Common myeloid progenitor, CD34-positive (primary cell): ENCODE measurements at regions of chr10 and their contacts with region 1.

Region 1: DNA sequence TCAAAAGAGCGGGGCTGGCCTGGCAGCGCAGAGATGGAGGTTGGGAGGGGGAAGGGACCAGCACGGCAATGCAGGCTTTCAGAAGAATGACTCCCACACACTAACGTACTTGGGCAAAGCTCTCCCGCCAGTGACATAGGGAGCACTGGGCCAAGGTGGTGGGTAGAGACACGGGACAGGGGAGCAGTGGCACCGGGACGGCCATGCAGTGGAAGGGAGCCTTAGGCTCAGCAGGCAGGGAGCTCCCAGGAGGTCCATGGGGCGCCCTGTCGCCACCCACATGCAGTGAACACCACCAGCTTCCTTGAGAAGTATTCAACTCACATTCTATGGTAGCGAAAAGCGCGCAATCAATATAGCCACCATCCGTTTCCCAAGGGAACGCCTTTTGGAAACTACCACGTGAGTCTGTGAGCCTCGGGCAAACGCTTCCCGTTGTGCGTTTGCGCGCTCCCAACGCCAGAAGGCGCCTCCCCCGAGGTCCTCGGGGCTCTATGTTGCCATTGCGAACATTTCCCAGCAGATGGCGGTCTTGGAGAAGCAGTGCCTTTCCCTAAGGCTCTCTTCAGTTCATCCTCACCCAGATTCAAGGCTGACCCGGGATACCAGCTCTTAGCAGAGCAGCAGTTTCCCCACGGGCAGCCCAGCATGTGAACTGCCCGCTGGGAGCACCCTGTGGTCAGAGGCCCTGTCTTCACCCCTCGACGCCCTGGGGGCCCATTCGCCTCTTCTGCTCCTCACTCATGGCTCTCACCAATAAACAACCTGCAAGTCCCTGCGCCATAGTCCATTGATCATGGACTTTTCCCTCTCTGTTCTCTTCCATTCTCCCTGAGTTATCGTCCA is 16.4 kb upstream of the OPALIN start:
- DNase-seq: peak; percentile 68 to 77 (median 70)
- H3K4me3 ChIP-seq: peak overlapping the region; percentile 17 to 86 (median 72)
- H3K27ac ChIP-seq: no peak overlapping the region
- H3K4me1 ChIP-seq: peaks cover 0 to 10% (median 5%) of the 10 kb centered on the region in 4 experiments
- H3K27me3 ChIP-seq: peaks cover 0 to 5% (median 0%) of the 10 kb centered on the region in 5 experiments

Region 2: DNA sequence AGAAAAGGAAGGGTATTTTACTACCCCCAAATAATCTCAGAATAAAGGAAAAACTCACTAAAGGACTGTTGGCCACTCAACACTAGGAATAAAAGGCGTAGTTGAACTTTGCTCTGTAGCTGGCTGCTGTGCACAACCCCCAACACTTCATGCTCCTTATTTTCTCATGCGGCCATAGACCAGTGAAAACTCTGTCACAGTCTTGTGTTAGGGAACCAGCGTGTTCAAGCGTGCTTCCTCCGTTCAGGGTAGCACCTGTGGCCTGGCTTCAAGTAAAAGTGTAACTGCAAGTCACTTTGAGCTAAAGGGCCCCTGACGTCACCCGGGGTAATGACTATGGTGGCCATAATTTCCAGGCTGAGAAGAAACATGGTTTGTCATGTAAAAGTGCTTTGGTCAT is 130.9 kb before region 1 on chr10:
- CTCF ChIA-PET with region 1: no interaction called
- POLR2A ChIA-PET with region 1: no interaction called
- DNase-seq: peak in 1 of 3 donors; percentile 37
- H3K4me3 ChIP-seq: no peak overlapping the region
- H3K27ac ChIP-seq: no peak overlapping the region
- H3K4me1 ChIP-seq: peaks cover 0 to 9% (median 2%) of the 10 kb centered on the region in 4 experiments
- H3K27me3 ChIP-seq: no peaks in the 10 kb centered on the region

Region 3: DNA sequence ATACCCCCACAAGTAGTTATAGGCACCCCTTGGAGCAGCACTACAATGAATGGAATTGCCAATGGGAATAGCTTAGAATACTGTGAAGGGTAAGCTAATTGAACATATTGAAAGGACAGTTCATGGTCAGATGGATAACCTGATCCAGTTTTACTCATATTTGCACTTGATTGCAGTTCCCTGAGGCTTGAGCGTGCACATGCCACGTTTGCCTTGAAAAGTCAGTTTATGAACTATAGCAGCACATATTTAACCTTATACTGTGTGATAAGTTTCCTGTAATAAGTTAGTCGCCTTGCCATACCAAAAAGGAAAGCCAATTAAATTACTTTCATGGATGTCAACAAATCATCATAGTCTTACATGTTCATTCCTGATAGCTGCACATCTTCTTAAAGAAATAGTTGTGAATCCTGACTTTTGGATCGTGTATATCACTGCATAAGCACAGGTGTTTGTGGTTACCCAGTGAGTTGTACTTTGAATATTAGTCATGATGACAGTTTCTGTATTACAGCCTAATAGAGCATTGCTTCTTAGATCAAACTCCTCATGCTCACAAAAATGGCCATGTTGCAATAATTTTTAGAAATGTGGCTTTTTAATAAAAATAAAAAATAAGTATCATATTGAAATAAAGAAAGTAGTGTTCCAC is 49.4 kb before region 1 on chr10:
- CTCF ChIA-PET with region 1: no interaction called
- POLR2A ChIA-PET with region 1: no interaction called
- DNase-seq: no peak
- H3K4me3 ChIP-seq: no peak overlapping the region
- H3K27ac ChIP-seq: no peak overlapping the region
- H3K4me1 ChIP-seq: peaks cover 0 to 11% (median 0%) of the 10 kb centered on the region in 4 experiments
- H3K27me3 ChIP-seq: peaks cover 0 to 8% (median 0%) of the 10 kb centered on the region in 5 experiments

Region 4: GRCh38 chr10:96360766-96361165 is 14.4 kb before region 1 on chr10:
- CTCF ChIA-PET with region 1: interaction called, 29 read pairs
- POLR2A ChIA-PET with region 1: no interaction called
- DNase-seq: no peak
- H3K4me3 ChIP-seq: no peak overlapping the region
- H3K27ac ChIP-seq: no peak overlapping the region
- H3K4me1 ChIP-seq: no peaks in the 10 kb centered on the region
- H3K27me3 ChIP-seq: peaks cover 0 to 14% (median 0%) of the 10 kb centered on the region in 5 experiments

Region 5: GRCh38 chr10:96390460-96390864 is 15.3 kb after region 1 on chr10:
- CTCF ChIA-PET with region 1: interaction called, 19 read pairs
- POLR2A ChIA-PET with region 1: no interaction called
- DNase-seq: no peak
- H3K4me3 ChIP-seq: no peak overlapping the region
- H3K27ac ChIP-seq: no peak overlapping the region
- H3K4me1 ChIP-seq: no peaks in the 10 kb centered on the region
- H3K27me3 ChIP-seq: peaks cover 0 to 13% (median 5%) of the 10 kb centered on the region in 5 experiments

Region 6: GRCh38 chr10:96470116-96470743 is 95.0 kb after region 1 on chr10:
- CTCF ChIA-PET with region 1: no interaction called
- POLR2A ChIA-PET with region 1: no interaction called
- DNase-seq: peak; percentile 21 to 55 (median 54)
- H3K4me3 ChIP-seq: no peak overlapping the region
- H3K27ac ChIP-seq: no peak overlapping the region
- H3K4me1 ChIP-seq: no peaks in the 10 kb centered on the region
- H3K27me3 ChIP-seq: peaks cover 0 to 9% (median 3%) of the 10 kb centered on the region in 5 experiments